CD8-positive, alpha-beta T cell (primary cell): ENCODE measurements at regions of chr7 and their contacts with region 1.

Region 1: GRCh38 chr7:74665296-74665938 is 7.9 kb downstream of the GTF2I start:
- DNase-seq: no peak
- ATAC-seq: no peak
- H3K4me3 ChIP-seq: no peak overlapping the region
- H3K4me3 Mint-ChIP-seq: no peak overlapping the region
- H3K27ac ChIP-seq: no peak overlapping the region
- H3K27ac Mint-ChIP-seq: no peak overlapping the region
- H3K4me1 ChIP-seq: peaks cover 20% of the 10 kb centered on the region
- H3K4me1 Mint-ChIP-seq: peaks cover 61% of the 10 kb centered on the region
- H3K27me3 ChIP-seq: no peaks in the 10 kb centered on the region
- H3K27me3 Mint-ChIP-seq: no peaks in the 10 kb centered on the region
- CTCF ChIP-seq: no peak

Region 2: DNA sequence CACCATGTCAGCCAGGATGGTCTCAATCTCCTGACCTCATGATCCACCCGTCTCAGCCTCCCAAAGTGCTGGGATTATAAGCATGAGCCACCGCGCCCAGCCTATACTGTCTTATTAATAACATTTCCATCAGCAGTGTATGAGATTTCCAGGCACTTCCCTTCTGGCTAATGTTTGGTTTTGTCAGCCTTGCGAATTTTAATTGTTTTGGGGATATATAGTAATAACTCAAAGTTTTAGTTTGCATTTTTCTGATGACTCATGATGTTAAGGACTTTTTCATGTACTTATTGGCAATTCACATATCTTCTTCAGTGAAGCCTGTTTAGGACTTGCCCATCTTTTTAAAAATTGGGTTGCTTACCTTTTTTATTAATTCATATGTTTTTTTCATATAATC is 728.5 kb before region 1 on chr7:
- CTCF ChIA-PET with region 1: no interaction called
- POLR2A ChIA-PET with region 1: no interaction called
- intact Hi-C with region 1: no loop called
- DNase-seq: no peak
- ATAC-seq: no peak
- H3K4me3 ChIP-seq: no peak overlapping the region
- H3K4me3 Mint-ChIP-seq: no peak overlapping the region
- H3K27ac ChIP-seq: no peak overlapping the region
- H3K27ac Mint-ChIP-seq: no peak overlapping the region
- H3K4me1 ChIP-seq: no peaks in the 10 kb centered on the region
- H3K4me1 Mint-ChIP-seq: no peaks in the 10 kb centered on the region
- H3K27me3 ChIP-seq: no peaks in the 10 kb centered on the region
- H3K27me3 Mint-ChIP-seq: peaks cover 15% of the 10 kb centered on the region
- CTCF ChIP-seq: no peak

Region 3: DNA sequence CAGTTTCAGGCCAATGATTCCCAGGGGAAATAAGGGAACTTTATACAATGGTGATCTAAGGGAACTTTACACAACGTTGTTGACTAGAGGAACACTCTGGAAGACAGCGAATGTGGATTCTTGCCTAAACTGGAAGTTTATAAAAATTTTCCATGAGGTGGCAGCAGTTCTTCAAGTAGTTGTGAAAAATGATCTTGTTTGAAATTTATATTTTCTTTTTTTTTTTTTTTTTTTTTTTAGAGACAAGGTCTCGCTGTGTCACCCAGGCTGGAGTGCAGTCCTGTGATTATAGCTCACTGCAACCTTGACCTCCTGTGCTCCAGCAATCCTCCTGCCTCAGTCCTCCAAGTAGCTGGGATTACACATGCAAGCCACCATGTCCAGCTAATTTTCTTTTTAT is 40.0 kb before region 1 on chr7:
- CTCF ChIA-PET with region 1: no interaction called
- POLR2A ChIA-PET with region 1: no interaction called
- intact Hi-C with region 1: no loop called
- DNase-seq: peak in 2 of 9 experiments; percentile 27 to 50
- ATAC-seq: no peak
- H3K4me3 ChIP-seq: no peak overlapping the region
- H3K4me3 Mint-ChIP-seq: no peak overlapping the region
- H3K27ac ChIP-seq: no peak overlapping the region
- H3K27ac Mint-ChIP-seq: no peak overlapping the region
- H3K4me1 ChIP-seq: no peaks in the 10 kb centered on the region
- H3K4me1 Mint-ChIP-seq: peaks cover 2% of the 10 kb centered on the region
- H3K27me3 ChIP-seq: no peaks in the 10 kb centered on the region
- H3K27me3 Mint-ChIP-seq: no peaks in the 10 kb centered on the region
- CTCF ChIP-seq: peak; percentile 29

Region 4: GRCh38 chr7:74684921-74685320 is 19.5 kb after region 1 on chr7:
- CTCF ChIA-PET with region 1: no interaction called
- POLR2A ChIA-PET with region 1: no interaction called
- intact Hi-C with region 1: loop called in 1 of 2 experiments (anchors 2 kb)
- DNase-seq: no peak
- ATAC-seq: no peak
- H3K4me3 ChIP-seq: no peak overlapping the region
- H3K4me3 Mint-ChIP-seq: no peak overlapping the region
- H3K27ac ChIP-seq: no peak overlapping the region
- H3K27ac Mint-ChIP-seq: no peak overlapping the region
- H3K4me1 ChIP-seq: no peaks in the 10 kb centered on the region
- H3K4me1 Mint-ChIP-seq: peaks cover 42% of the 10 kb centered on the region
- H3K27me3 ChIP-seq: no peaks in the 10 kb centered on the region
- H3K27me3 Mint-ChIP-seq: no peaks in the 10 kb centered on the region
- CTCF ChIP-seq: no peak